Dorsolateral prefrontal cortex (tissue), 120 donors: ENCODE measurements at regions of chr21 and their contacts with region 1.

Region 1: DNA sequence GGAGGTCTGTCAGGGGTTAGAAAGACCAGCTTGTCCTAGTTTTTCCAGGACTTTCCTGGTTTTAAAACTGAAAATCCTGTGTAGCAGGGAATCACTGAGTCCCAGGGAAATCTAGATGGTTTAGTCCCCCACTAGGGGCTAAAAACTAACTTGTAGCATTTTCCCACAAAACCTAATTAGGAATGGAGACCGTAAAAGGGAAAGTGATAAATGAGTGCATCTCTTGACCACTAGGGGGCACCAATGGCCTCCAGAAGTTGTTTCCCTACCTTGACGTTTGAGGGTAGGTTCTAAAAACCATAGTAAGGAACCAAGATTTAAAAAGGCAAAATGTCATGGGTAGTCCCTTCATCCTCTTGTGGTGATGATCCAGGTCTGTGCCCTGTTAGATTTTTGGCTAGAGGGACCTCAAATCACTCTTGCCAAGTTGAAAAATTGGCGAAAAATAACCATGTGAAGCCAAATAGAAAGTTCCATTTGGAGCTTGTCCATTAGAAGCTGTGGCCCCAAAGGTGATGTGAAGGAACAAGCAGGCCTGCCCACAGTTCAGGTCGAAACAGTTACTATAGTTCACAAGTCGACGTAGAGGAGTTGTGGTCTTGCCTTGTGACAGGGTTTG is 24.5 kb downstream of the CLIC6 start:
- DNase-seq: peak in 1 of 10 donors; percentile 28
- H3K4me3 ChIP-seq: no peak overlapping the region
- H3K27ac ChIP-seq: no peak overlapping the region
- H3K27me3 ChIP-seq: peaks cover 0 to 42% (median 7%) of the 10 kb centered on the region in 45 donors
- CTCF ChIP-seq: peak; percentile 55 to 83 (median 76)

Region 2: DNA sequence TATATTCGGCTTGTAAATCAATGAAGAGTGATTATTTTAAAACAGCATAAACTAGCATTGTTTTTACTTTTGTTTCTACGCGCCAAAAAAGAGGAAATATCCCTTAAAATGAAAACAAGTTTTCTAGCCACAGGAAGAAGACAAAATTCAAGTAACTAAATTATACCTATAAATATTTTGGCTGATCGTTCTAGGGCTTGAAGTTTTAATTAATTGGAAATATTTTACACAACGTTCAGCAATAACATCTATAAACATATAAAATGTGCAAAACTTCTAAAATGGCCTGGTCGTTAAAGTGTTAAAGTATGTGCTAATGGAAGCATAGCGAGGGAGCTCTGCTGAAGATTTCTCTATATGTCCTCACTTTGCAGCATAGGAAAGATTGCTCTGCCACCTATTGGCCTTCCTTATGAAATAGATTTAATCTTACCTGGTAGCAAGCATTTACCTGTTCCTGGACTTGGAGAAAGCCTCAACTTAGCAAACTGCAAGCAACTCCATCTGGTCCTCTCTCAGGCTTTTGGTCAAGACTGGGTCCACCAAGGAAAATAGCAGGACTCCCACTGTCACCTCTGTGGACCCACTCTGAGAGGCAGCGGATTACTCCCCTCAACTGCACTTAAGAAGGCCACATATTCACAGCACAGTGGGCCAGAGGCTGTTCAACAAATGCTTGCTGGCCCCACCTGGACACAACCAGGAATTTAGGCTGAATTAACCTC is 707.1 kb after region 1 on chr21:
- intact Hi-C with region 1: loop called in 1 of 2 experiments (anchors 10 kb)
- DNase-seq: no peak
- H3K4me3 ChIP-seq: peak overlapping the region in 1 of 59 donors; percentile 1
- H3K27ac ChIP-seq: no peak overlapping the region
- H3K27me3 ChIP-seq: peaks cover 0 to 26% (median 6%) of the 10 kb centered on the region in 45 donors
- CTCF ChIP-seq: peak in 51 of 56 donors; percentile 15 to 63 (median 34)

Region 3: GRCh38 chr21:35840197-35840799 is 1147.0 kb after region 1 on chr21:
- intact Hi-C with region 1: loop called in 1 of 2 experiments (anchors 10 kb)
- DNase-seq: peak in 5 of 10 donors; percentile 13 to 77 (median 35)
- H3K4me3 ChIP-seq: no peak overlapping the region
- H3K27ac ChIP-seq: no peak overlapping the region
- H3K27me3 ChIP-seq: peaks cover 0 to 3% (median 0%) of the 10 kb centered on the region in 45 donors
- CTCF ChIP-seq: peak; percentile 55 to 95 (median 79)

Region 4: DNA sequence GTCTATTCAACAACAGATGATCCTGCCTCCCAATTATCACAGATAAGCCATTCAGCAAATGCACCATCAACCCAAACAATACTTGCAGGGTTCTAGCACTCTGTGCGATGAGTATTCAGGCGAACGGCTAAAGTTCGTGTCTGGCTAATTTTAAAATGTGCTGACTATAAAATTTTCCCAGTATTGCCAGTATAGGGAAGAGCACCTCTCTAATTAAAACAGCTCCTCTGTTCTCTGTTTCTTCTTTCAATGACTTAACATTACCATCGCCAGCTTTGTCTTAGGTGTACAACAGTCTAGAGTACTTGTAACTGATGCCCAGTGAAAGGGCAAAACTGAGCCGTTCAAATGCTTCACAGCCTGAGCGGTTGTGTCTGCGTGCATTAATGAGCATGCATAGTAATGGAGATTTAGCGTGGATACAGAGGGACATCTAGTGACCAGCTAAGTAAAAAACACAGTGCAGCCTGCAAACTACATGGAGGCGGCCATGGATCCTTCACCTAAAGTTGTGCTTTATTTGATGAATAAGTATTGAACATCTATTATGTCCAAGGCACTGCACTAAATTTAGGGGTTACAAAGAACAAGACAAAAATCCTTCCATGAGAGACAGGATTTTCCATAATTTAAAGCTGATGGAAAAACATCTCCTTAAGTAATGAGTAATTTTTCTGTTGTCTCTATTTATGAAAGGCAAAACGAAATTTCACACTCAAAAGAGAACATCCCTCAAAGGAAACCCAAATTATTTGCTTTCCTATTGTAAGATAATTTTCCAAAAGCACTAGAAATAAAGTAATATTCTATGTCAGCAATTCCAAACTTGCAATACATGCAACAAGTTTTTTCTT is 1247.0 kb after region 1 on chr21:
- intact Hi-C with region 1: loop called in 1 of 2 experiments (anchors 2 kb)
- DNase-seq: peak in 6 of 10 donors; percentile 14 to 59 (median 46)
- H3K4me3 ChIP-seq: peak overlapping the region in 31 of 59 donors; percentile 10 to 59 (median 27)
- H3K27ac ChIP-seq: no peak overlapping the region
- H3K27me3 ChIP-seq: peaks cover 0 to 5% (median 0%) of the 10 kb centered on the region in 45 donors
- CTCF ChIP-seq: peak in 55 of 56 donors; percentile 45 to 84 (median 67)

Region 5: GRCh38 chr21:36028127-36029069 is 1335.1 kb after region 1 on chr21:
- intact Hi-C with region 1: loop called in 1 of 2 experiments (anchors 5 kb)
- DNase-seq: peak; percentile 64 to 87 (median 76)
- H3K4me3 ChIP-seq: no peak overlapping the region
- H3K27ac ChIP-seq: no peak overlapping the region
- H3K27me3 ChIP-seq: no peaks in the 10 kb centered on the region
- CTCF ChIP-seq: peak; percentile 73 to 97 (median 94)